ENCODE measurements at regions of chr11 and their contacts with region 1.

Region 1: GRCh38 chr11:119334174-119334930 is at the start of gene RNF26:
- DNase-seq: peak; percentile 93
- H3K4me3 ChIP-seq: peak within 1 kb of the TSS; percentile 94
- H3K27ac ChIP-seq: peak within 1 kb of the TSS; percentile 57
- H3K27me3 ChIP-seq: no peaks in the 10 kb centered on the region
- CTCF ChIP-seq: no peak
- polyA plus RNA-seq, gene RNF26: 27.1 and 35.3 TPM in 2 replicates

Region 2: DNA sequence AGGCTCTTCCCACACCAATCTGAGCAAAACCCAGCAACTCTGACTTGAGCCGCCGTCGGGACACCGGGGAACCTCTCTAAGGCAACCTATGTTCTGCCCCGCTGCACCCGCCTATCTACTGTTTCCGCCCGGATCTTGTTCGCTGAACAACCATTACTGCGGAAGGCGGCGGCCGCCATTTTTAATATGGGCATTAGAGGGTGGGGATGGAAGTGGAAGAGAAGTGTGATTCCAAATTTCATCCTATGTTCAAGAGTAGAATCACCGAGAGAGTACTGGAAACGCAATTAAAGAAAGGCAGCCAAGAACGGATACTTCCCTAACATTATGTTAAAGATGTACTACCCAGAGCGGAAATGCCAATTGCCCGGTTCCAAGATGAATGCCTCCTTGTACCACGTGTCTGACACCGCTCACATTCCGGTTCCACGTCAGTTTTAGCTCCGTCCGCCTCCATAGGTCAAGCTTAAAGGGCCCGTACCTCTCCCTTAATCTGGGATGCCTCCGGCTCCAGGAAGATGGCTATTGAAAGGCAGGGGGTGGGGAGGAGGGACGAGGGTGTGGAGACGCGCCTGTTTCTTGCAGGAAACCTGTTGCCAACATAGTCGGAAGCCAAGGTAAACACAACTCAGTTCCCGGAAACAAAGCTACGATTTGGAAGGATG is 232.5 kb before region 1 on chr11 and contains the start of gene DPAGT1:
- CTCF ChIA-PET with region 1: interaction called, 25 read pairs
- POLR2A ChIA-PET with region 1: interaction called, 10 read pairs
- DNase-seq: peak; percentile 91
- H3K4me3 ChIP-seq: peak within 1 kb of the TSS; percentile 87
- H3K27ac ChIP-seq: peak within 1 kb of the TSS; percentile 93
- H3K27me3 ChIP-seq: no peaks in the 10 kb centered on the region
- CTCF ChIP-seq: no peak
- polyA plus RNA-seq, gene DPAGT1: 59.2 and 62.5 TPM in 2 replicates

Region 3: DNA sequence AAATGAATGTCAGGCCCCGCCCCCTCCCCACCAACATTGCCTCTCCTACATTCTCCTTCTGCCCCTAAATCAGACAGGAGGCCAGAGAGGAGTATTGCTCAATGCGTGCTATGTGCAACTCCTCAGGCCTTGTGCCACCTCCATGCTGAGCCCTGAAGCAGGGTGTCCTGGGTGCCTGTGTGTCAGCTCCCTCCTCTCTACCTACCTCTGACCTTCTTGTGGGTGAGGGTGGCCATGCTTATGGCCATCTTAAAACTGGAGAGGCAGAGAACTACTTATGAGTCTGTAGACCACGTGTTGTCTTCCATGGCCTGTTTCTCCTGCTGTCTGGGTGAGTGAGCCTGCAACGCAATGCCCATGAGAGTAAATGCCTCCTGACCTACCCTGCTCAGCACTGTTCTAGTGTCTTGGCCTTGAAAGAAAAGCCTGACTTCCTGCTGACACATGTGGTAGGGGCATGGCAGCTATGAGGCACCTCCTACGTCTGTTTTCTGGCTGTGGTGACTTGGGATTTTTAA is 27.9 kb before region 1 on chr11:
- CTCF ChIA-PET with region 1: interaction called, 11 read pairs
- POLR2A ChIA-PET with region 1: no interaction called
- DNase-seq: no peak
- H3K4me3 ChIP-seq: no peak overlapping the region
- H3K27ac ChIP-seq: peak overlapping the region; percentile 39
- H3K27me3 ChIP-seq: no peaks in the 10 kb centered on the region
- CTCF ChIP-seq: no peak

Region 4: DNA sequence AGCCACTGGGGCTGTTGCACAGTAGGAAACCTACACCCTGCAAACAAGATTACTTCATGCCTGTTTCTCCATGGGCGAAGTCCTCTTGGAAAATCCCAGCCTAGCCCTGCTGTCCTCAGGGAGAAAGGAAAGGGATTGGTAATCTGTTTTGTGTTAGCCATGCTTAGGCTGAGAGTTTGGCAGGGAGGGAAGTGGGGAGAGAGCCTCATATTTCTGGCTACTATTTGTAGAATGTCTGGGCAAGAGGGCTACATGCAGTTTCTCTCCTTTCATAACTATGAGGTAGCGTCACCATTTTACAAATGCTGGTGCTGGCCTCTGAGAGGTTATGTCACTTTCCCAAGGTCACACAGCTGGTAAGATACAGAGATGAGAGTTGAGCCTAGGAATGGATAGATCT is 12.9 kb after region 1 on chr11:
- CTCF ChIA-PET with region 1: interaction called, 31 read pairs
- POLR2A ChIA-PET with region 1: interaction called, 4 read pairs
- DNase-seq: no peak
- H3K4me3 ChIP-seq: no peak overlapping the region
- H3K27ac ChIP-seq: no peak overlapping the region
- H3K27me3 ChIP-seq: peaks cover 56% of the 10 kb centered on the region
- CTCF ChIP-seq: no peak

Region 5: GRCh38 chr11:119373921-119374631 is 39.7 kb after region 1 on chr11:
- CTCF ChIA-PET with region 1: interaction called, 74 read pairs
- POLR2A ChIA-PET with region 1: interaction called, 14 read pairs
- DNase-seq: peak; percentile 51
- H3K4me3 ChIP-seq: no peak overlapping the region
- H3K27ac ChIP-seq: no peak overlapping the region
- H3K27me3 ChIP-seq: peaks cover 12% of the 10 kb centered on the region
- CTCF ChIP-seq: peak; percentile 97

Region 6: GRCh38 chr11:119468511-119468910 is 134.2 kb after region 1 on chr11:
- CTCF ChIA-PET with region 1: interaction called, 14 read pairs
- POLR2A ChIA-PET with region 1: interaction called, 10 read pairs
- DNase-seq: no peak
- H3K4me3 ChIP-seq: no peak overlapping the region
- H3K27ac ChIP-seq: no peak overlapping the region
- H3K27me3 ChIP-seq: no peaks in the 10 kb centered on the region
- CTCF ChIP-seq: no peak

Measured in AG04450 (cell line).